Activated B cell treated with CpG ODN at 0.5 μM for 24 hours (primary cell): ENCODE measurements at regions of chr9 and their contacts with region 1.

Region 1: DNA sequence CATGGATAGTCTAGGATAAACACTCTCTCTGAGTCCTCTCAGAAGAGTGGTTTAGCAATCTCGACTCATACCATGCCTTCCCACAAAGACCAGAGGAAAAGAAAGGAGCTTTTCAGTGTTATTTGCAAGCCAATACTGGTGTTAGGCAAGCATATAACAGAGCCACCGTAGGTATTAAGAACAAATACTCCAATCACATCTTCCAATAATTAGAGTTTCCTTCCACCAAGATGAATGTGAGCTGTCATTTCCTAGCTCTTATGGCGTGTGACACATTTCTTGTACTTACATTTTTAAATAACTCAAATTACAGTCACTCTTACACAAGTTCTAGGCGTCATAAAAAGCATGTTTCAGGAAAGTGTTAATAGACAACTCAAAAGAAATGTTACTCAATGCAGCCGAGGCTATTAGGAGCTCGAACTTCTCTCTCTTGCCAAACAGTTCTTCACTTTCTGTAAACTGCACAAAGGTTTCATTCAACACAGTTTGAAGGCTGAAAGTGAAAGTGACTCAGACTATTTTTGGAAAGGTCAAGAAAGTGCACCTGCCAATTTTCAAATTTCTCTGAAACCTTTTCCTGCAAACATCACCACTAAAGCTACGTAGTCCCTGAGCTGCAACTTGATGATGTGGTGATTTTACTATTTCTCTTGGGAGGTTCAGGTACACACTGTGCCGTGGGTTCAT is 153.8 kb downstream of the AUH start:
- DNase-seq: no peak
- ATAC-seq: peak; percentile 89
- H3K4me3 Mint-ChIP-seq: peak overlapping the region; percentile 47
- H3K27ac Mint-ChIP-seq: peak overlapping the region; percentile 83
- H3K4me1 Mint-ChIP-seq: peaks cover 36% of the 10 kb centered on the region
- H3K27me3 Mint-ChIP-seq: no peaks in the 10 kb centered on the region
- CTCF ChIP-seq: no peak

Region 2: GRCh38 chr9:90830977-90831376 is 376.9 kb before region 1 on chr9:
- CTCF ChIA-PET with region 1: no interaction called
- POLR2A ChIA-PET with region 1: no interaction called
- intact Hi-C with region 1: no loop called
- DNase-seq: peak; percentile 45
- ATAC-seq: peak; percentile 65
- H3K4me3 Mint-ChIP-seq: peak overlapping the region; percentile 87
- H3K27ac Mint-ChIP-seq: peak overlapping the region; percentile 96
- H3K4me1 Mint-ChIP-seq: peaks cover 99% of the 10 kb centered on the region
- H3K27me3 Mint-ChIP-seq: no peaks in the 10 kb centered on the region
- CTCF ChIP-seq: no peak

Region 3: DNA sequence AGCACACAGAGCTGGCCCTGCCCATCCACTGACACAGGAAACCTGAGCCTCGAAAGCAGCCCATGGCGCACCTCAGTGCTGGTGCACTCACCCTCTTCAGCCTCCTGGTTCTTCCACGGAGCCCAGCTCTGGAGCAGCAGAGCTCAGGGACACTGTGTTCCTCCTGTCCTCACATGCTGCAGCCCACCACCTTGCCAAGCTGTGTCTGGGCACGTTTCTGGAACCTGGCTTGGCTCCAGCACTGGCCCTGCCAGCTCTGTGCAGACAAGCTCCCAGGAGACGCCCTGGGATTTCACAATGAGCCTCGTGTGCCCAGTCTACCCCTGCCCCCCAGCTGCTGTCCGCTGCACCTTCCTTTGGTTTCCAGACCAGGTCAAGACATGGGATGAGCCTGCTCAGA is 286.8 kb before region 1 on chr9:
- CTCF ChIA-PET with region 1: no interaction called
- POLR2A ChIA-PET with region 1: no interaction called
- intact Hi-C with region 1: loop called (anchors 10 kb)
- DNase-seq: no peak
- ATAC-seq: no peak
- H3K4me3 Mint-ChIP-seq: no peak overlapping the region
- H3K27ac Mint-ChIP-seq: no peak overlapping the region
- H3K4me1 Mint-ChIP-seq: peaks cover 12% of the 10 kb centered on the region
- H3K27me3 Mint-ChIP-seq: peaks cover 6% of the 10 kb centered on the region
- CTCF ChIP-seq: no peak

Region 4: GRCh38 chr9:91150998-91151717 is 56.7 kb before region 1 on chr9:
- CTCF ChIA-PET with region 1: no interaction called
- POLR2A ChIA-PET with region 1: interaction called, 17 read pairs
- intact Hi-C with region 1: loop called (anchors 1 kb)
- DNase-seq: no peak
- ATAC-seq: peak; percentile 77
- H3K4me3 Mint-ChIP-seq: peak overlapping the region; percentile 30
- H3K27ac Mint-ChIP-seq: peak overlapping the region; percentile 62
- H3K4me1 Mint-ChIP-seq: peaks cover 50% of the 10 kb centered on the region
- H3K27me3 Mint-ChIP-seq: no peaks in the 10 kb centered on the region
- CTCF ChIP-seq: no peak

Region 5: GRCh38 chr9:91361291-91362050 is 153.6 kb after region 1 on chr9 and contains the start of gene AUH:
- CTCF ChIA-PET with region 1: no interaction called
- POLR2A ChIA-PET with region 1: interaction called, 5 read pairs
- intact Hi-C with region 1: loop called (anchors 5 kb)
- DNase-seq: peak; percentile 89
- ATAC-seq: peak; percentile 97
- H3K4me3 Mint-ChIP-seq: peak within 1 kb of the TSS; percentile 94
- H3K27ac Mint-ChIP-seq: peak within 1 kb of the TSS; percentile 89
- H3K4me1 Mint-ChIP-seq: peaks cover 34% of the 10 kb centered on the region
- H3K27me3 Mint-ChIP-seq: no peaks in the 10 kb centered on the region
- CTCF ChIP-seq: no peak
- total RNA-seq, gene AUH: 11.1 and 14.0 TPM in 2 replicates